PC-3 (cell line): ENCODE measurements at regions of chrX and their contacts with region 1.

Region 1: GRCh38 chrX:108224727-108225621 is 133.4 kb downstream of the ATG4A start:
- DNase-seq: peak; percentile 65
- ATAC-seq: peak; percentile 64
- H3K4me3 ChIP-seq: no peak overlapping the region
- H3K27ac ChIP-seq: no peak overlapping the region
- H3K4me1 ChIP-seq: peaks cover 4% of the 10 kb centered on the region; the same call in 1 of the 2 replicates
- H3K27me3 ChIP-seq: no peaks in the 10 kb centered on the region
- CTCF ChIP-seq: peak; percentile 75

Region 2: GRCh38 chrX:107776649-107777535 is 448.1 kb before region 1 on chrX:
- CTCF ChIA-PET with region 1: no interaction called
- POLR2A ChIA-PET with region 1: no interaction called
- intact Hi-C with region 1: no loop called
- DNase-seq: peak; percentile 94
- ATAC-seq: peak; percentile 74
- H3K4me3 ChIP-seq: peak overlapping the region; percentile 77
- H3K27ac ChIP-seq: no peak overlapping the region
- H3K4me1 ChIP-seq: peaks cover 10% of the 10 kb centered on the region
- H3K27me3 ChIP-seq: no peaks in the 10 kb centered on the region
- CTCF ChIP-seq: peak; percentile 77

Region 3: DNA sequence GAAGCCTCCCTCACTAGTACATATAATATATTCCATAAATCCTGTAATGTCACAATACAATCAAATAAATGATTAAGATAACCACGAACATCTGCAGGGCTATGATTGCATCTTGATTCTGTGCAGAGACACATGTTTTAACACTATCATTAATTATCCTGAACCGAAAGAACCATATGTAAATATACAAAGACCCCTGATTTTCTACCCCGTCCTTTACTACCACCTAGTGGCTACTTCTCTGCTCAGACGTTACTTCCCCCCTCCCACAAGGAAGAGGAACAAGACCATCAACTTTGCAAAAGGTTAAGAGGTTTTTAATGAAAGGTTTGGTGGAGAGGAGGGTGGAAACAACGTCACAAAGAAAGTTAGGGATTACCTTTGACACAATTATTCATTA is 79.2 kb after region 1 on chrX:
- CTCF ChIA-PET with region 1: interaction called, 5 read pairs
- POLR2A ChIA-PET with region 1: no interaction called
- intact Hi-C with region 1: loop called (anchors 2 kb)
- DNase-seq: peak; percentile 41
- ATAC-seq: no peak
- H3K4me3 ChIP-seq: no peak overlapping the region
- H3K27ac ChIP-seq: no peak overlapping the region; the same call in 1 of the 2 replicates
- H3K4me1 ChIP-seq: peaks cover 42% of the 10 kb centered on the region
- H3K27me3 ChIP-seq: no peaks in the 10 kb centered on the region
- CTCF ChIP-seq: peak; percentile 74

Region 4: DNA sequence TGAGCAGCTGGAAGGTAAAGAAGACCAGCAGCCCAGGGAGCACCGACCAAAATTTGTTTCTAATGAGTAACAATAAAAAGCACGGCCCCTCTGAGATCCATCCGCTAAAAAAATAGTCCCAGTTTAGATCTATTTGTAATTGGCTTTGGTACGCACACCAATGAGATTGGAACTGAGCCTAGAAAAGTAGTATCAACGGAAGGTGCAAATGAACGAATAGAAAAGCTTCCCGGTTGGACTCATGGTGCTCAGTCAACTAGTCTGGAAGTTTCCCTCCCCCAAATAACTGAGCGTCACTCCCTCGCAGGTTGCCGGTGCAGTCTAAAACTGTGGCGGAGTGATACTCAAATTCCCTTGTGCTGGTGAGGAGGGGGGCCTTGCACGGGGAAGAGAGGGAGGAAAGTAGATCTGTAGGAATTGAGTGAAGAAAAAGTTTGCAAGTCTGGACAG is 214.5 kb after region 1 on chrX and contains the start of gene COL4A5:
- CTCF ChIA-PET with region 1: no interaction called
- POLR2A ChIA-PET with region 1: no interaction called
- intact Hi-C with region 1: loop called (anchors 10 kb)
- DNase-seq: peak; percentile 90
- ATAC-seq: peak; percentile 79
- H3K4me3 ChIP-seq: peak within 1 kb of the TSS; percentile 87
- H3K27ac ChIP-seq: peak within 1 kb of the TSS; percentile 65
- H3K4me1 ChIP-seq: peaks cover 23% of the 10 kb centered on the region
- H3K27me3 ChIP-seq: no peaks in the 10 kb centered on the region
- CTCF ChIP-seq: no peak
- total RNA-seq, gene COL4A5: 30.0 and 63.8 TPM in 2 replicates